Esophagus squamous epithelium (tissue), 5 donors: ENCODE measurements at regions of chr3 and their contacts with region 1.

Region 1: DNA sequence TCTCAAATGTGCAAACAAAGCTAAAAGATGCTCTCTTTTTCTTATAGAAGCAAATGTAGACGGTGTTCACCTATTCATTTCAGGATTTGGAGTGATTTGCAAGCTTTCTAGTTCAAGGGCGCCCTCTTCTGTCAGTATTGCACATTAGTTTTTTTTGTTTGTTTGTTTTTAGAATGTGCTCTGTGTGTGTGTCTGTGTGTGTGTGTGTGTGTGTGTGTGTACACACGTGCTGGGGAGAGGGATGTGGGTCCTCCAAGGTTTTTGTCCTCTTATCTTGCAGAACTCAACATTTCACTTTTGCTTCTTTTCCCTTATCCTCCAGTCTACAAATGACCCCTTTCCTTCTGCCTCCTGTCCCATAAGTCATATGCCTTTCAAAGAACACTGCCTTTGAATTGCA is 23.5 kb downstream of the DNAH1 start:
- DNase-seq: no peak
- H3K4me3 ChIP-seq: no peak overlapping the region
- H3K27ac ChIP-seq: no peak overlapping the region
- H3K4me1 ChIP-seq: no peaks in the 10 kb centered on the region
- H3K27me3 ChIP-seq: no peaks in the 10 kb centered on the region
- CTCF ChIP-seq: peak in 5 of 6 experiments; percentile 63 to 76 (median 71)
- POLR2A ChIP-seq: no peak

Region 2: GRCh38 chr3:52220380-52221026 is 119.1 kb before region 1 on chr3:
- intact Hi-C with region 1: loop called (anchors 5 kb)
- DNase-seq: no peak
- H3K4me3 ChIP-seq: no peak overlapping the region
- H3K27ac ChIP-seq: no peak overlapping the region
- H3K4me1 ChIP-seq: peaks cover 33 to 64% (median 41%) of the 10 kb centered on the region in 3 donors
- H3K27me3 ChIP-seq: no peaks in the 10 kb centered on the region
- CTCF ChIP-seq: peak; percentile 85 to 96 (median 90)
- POLR2A ChIP-seq: no peak